ENCODE measurements at regions of chr1 and their contacts with region 1.

Region 1: DNA sequence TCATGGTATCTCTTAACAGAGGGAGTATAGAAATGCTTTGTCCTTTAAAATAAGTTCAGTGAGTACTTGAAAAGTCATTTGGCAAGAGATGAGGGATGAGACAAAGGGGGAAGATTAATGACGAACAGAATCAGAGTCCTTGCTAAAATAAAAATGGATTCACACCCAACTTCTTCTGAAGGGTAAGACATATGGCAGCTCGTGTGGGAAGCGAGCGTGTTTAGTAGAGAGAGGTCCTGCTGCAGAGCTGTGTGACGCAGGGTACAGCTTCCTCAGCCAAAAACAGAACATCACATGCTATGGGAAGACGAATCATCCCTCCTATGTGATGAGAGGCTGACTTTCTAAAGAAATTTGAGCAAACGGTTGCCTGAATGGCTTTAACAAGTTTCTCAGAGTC is 158.5 kb upstream of the LMO4 start:
- DNase-seq: no peak
- ATAC-seq: no peak
- H3K4me3 ChIP-seq: no peak overlapping the region
- H3K27ac ChIP-seq: no peak overlapping the region
- H3K4me1 ChIP-seq: peaks cover 0 to 9% (median 0%) of the 10 kb centered on the region in 9 donors
- H3K27me3 ChIP-seq: peaks cover 0 to 8% (median 5%) of the 10 kb centered on the region in 7 donors
- CTCF ChIP-seq: no peak

Region 2: GRCh38 chr1:86948212-86948611 is 221.9 kb before region 1 on chr1:
- intact Hi-C with region 1: no loop called
- DNase-seq: peak in 1 of 2 donors; percentile 47
- ATAC-seq: peak; percentile 65 to 99 (median 89)
- H3K4me3 ChIP-seq: no peak overlapping the region
- H3K27ac ChIP-seq: peak overlapping the region in 3 of 10 donors; percentile 13 to 33 (median 24)
- H3K4me1 ChIP-seq: peaks cover 0 to 20% (median under 1%) of the 10 kb centered on the region in 9 donors
- H3K27me3 ChIP-seq: no peaks in the 10 kb centered on the region
- CTCF ChIP-seq: no peak

Region 3: DNA sequence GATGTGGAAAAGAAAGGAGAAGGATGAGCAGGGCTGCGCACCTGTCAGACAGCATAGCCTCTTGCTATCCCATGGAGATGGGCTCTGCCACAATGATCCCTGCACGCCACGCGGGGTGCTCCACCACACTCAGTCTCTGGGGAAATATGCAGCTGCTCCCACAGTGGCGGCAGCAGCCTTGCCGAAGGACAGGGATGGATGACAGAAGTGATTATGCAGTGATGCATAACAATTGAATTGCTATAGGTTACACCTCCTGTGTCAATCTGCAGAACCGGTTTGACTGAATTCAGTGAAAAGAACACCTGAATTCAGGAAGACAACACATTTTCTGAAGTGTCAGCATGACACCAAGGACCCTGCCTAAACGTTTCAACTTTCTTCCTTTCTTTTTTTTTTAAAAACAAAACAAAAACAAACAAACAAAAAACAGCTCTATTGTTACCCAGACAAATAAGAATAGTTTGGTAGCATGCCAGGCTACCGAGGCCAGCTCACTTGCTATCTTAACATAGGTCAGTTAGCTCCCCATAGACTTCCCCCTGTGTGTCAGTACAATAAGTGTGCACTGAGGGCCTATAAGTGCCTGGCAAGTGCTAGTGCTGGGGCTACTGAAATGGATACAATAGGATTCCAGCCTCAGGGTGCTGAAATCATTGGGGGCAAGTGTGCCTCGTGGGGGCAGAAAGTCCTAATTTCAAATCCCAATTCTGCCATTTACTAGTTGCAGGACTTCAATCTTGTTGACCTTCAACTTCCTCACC is 30.9 kb after region 1 on chr1:
- intact Hi-C with region 1: loop called in 1 of 10 experiments (anchors 2 kb)
- DNase-seq: no peak
- ATAC-seq: no peak
- H3K4me3 ChIP-seq: no peak overlapping the region
- H3K27ac ChIP-seq: no peak overlapping the region
- H3K4me1 ChIP-seq: peaks cover 0 to 4% (median 0%) of the 10 kb centered on the region in 9 donors
- H3K27me3 ChIP-seq: peaks cover 0 to 7% (median 0%) of the 10 kb centered on the region in 7 donors
- CTCF ChIP-seq: no peak

Region 4: GRCh38 chr1:88655685-88656299 is 1485.6 kb after region 1 on chr1:
- intact Hi-C with region 1: no loop called
- DNase-seq: no peak
- ATAC-seq: no peak
- H3K4me3 ChIP-seq: no peak overlapping the region
- H3K27ac ChIP-seq: no peak overlapping the region
- H3K4me1 ChIP-seq: peaks cover 0 to 3% (median 0%) of the 10 kb centered on the region in 9 donors
- H3K27me3 ChIP-seq: no peaks in the 10 kb centered on the region
- CTCF ChIP-seq: peak; percentile 44 to 80 (median 72)

Measured in heart right ventricle (tissue), 16 donors.